OCI-LY7 (cell line): ENCODE measurements at regions of chr11 and their contacts with region 1.

Region 1: GRCh38 chr11:81644239-81644840 is 1089.3 kb downstream of the FAM181B start:
- DNase-seq: peak; percentile 74
- H3K4me3 ChIP-seq: no peak overlapping the region
- H3K27ac ChIP-seq: no peak overlapping the region
- H3K4me1 ChIP-seq: no peaks in the 10 kb centered on the region
- CTCF ChIP-seq: peak; percentile 93

Region 2: DNA sequence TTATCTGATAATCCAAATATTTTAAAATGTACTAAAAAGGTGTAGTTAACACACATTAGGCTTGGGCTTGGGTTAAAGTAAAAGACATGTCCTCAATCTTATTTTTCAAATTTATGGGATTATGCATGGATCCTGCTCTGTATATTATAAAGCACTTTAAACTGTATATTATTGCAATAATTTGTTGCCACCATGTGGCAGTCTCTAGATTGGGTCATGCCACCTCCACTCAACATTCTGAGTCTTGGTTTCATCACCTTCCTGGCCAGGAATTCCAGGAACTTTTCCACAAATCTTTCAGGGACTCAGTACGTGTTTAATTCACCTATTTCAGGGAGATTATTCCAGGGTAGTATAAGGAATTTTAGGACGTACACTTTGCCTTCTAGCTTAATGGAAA is 393.8 kb after region 1 on chr11:
- CTCF ChIA-PET with region 1: no interaction called
- POLR2A ChIA-PET with region 1: no interaction called
- intact Hi-C with region 1: loop called (anchors 10 kb)
- DNase-seq: peak; percentile 1
- H3K4me3 ChIP-seq: no peak overlapping the region
- H3K27ac ChIP-seq: no peak overlapping the region
- H3K4me1 ChIP-seq: no peaks in the 10 kb centered on the region
- CTCF ChIP-seq: peak; percentile 56

Region 3: GRCh38 chr11:82229341-82229740 is 585.0 kb after region 1 on chr11:
- CTCF ChIA-PET with region 1: no interaction called
- POLR2A ChIA-PET with region 1: no interaction called
- intact Hi-C with region 1: loop called (anchors 2 kb)
- DNase-seq: peak; percentile 37
- H3K4me3 ChIP-seq: no peak overlapping the region
- H3K27ac ChIP-seq: no peak overlapping the region
- H3K4me1 ChIP-seq: no peaks in the 10 kb centered on the region
- CTCF ChIP-seq: peak; percentile 79

Region 4: DNA sequence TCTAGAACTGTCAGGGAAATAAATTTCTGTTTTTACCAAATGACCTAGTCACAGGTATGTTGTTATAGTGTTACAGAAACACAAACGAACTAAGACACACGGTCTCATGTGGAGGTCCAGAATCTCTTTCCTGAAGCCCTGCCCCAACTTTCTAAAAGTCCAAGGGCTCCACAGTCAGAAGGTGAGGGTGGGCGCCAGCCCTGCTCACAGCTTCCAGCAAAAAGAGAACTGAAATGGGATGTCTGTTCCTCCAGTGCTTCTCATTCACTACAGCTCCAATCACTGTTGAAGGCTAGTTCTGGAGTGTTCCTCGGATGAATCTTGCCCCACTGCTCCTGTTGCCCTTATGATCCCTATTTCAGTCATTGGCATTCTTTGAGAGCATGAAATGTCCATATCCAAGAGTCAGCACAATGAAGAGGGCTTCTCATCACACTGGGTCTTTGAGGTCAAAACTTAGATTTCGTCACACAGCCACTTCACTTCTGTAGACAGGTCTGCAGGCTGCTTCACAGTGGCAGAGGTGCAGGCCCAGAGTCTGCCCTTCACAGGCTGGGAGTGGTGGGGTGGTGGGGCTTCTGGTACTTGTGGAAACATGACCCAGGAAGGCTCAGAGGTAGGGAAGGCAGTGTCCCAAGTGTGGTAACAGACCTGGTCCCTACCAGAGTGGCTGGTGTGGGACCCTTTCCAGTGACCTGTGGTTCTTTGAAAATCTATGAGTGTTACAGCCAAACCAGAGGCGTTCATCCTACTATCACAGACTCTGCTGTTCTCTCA is 1054.4 kb after region 1 on chr11:
- CTCF ChIA-PET with region 1: no interaction called
- POLR2A ChIA-PET with region 1: no interaction called
- intact Hi-C with region 1: loop called (anchors 10 kb)
- DNase-seq: no peak
- H3K4me3 ChIP-seq: no peak overlapping the region
- H3K27ac ChIP-seq: no peak overlapping the region
- H3K4me1 ChIP-seq: no peaks in the 10 kb centered on the region
- CTCF ChIP-seq: no peak